A673 (cell line): ENCODE measurements at regions of chr14 and their contacts with region 1.

Region 1: GRCh38 chr14:77320238-77320935 is at the start of gene POMT2:
- DNase-seq: peak; percentile 95
- H3K4me3 ChIP-seq: peak within 1 kb of the TSS; percentile 82
- H3K27ac ChIP-seq: peak within 1 kb of the TSS; percentile 97
- H3K4me1 ChIP-seq: peaks cover 21% of the 10 kb centered on the region
- H3K27me3 ChIP-seq: no peaks in the 10 kb centered on the region
- CTCF ChIP-seq: peak; percentile 36; the same call in 1 of the 2 replicates
- total RNA-seq, gene POMT2: 49.5 and 55.6 TPM in 2 replicates

Region 2: GRCh38 chr14:77376771-77377501 is 56.5 kb after region 1 on chr14 and contains the starts of genes SAMD15 and TMED8:
- CTCF ChIA-PET with region 1: interaction called, 3 read pairs
- POLR2A ChIA-PET with region 1: no interaction called
- intact Hi-C with region 1: loop called (anchors 2 kb)
- DNase-seq: peak; percentile 89
- H3K4me3 ChIP-seq: peak within 1 kb of the TSS; percentile 76
- H3K27ac ChIP-seq: peak within 1 kb of the TSS; percentile 85
- H3K4me1 ChIP-seq: peaks cover 10% of the 10 kb centered on the region
- H3K27me3 ChIP-seq: no peaks in the 10 kb centered on the region
- CTCF ChIP-seq: 0 out of 2 replicates have a peak, but pooled peaks have one; percentile 25
- total RNA-seq, gene SAMD15: 2.4 and 2.9 TPM in 2 replicates
- total RNA-seq, gene TMED8: 21.0 and 22.8 TPM in 2 replicates

Region 3: GRCh38 chr14:77400219-77400618 is 79.8 kb after region 1 on chr14:
- CTCF ChIA-PET with region 1: no interaction called
- POLR2A ChIA-PET with region 1: interaction called, 17 read pairs
- intact Hi-C with region 1: no loop called
- DNase-seq: no peak
- H3K4me3 ChIP-seq: no peak overlapping the region
- H3K27ac ChIP-seq: no peak overlapping the region
- H3K4me1 ChIP-seq: no peaks in the 10 kb centered on the region
- H3K27me3 ChIP-seq: no peaks in the 10 kb centered on the region
- CTCF ChIP-seq: no peak

Region 4: DNA sequence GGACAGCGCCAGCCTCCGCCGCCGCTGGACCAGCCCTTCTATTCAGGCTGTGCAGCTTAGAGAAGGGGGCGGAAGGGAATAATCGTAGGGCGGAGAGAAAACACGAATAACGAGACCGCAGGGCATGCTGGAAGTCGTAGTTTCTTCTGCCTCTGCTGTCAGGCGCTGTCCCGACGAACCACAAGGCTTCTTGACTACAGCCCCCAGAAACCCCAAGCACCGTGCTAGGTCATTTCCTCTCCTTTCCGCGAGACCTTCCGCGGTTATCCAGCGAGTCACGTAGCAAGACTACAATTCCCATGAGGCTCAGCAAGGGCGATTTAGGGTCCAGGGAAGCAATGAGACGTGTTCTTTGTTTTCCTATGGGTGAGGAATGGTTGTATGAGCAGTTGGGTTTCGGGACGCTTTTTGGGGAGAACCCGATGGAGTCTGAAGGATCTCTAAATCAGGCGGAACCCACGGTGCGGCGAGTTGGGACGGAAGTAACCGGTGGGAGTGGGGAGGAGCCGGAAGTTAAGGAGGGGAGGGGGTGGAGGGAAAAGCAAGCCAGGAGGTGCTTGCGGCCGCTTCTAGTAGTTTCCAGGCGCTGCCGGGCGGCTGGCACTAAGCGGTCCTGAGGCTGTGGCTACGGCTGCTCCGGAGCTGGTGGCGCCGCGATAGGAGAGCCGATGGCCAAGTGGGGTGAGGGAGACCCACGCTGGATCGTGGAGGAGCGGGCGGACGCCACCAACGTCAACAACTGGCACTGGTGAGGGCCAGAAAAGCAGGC is 137.3 kb after region 1 on chr14 and contains the starts of genes AHSA1 and VIPAS39:
- CTCF ChIA-PET with region 1: interaction called, 3 read pairs
- POLR2A ChIA-PET with region 1: interaction called, 9 read pairs
- intact Hi-C with region 1: loop called (anchors 2 kb)
- DNase-seq: peak; percentile 99
- H3K4me3 ChIP-seq: peak within 1 kb of the TSS; percentile 88
- H3K27ac ChIP-seq: peak within 1 kb of the TSS; percentile 95
- H3K4me1 ChIP-seq: peaks cover 14% of the 10 kb centered on the region
- H3K27me3 ChIP-seq: no peaks in the 10 kb centered on the region
- CTCF ChIP-seq: no peak
- total RNA-seq, gene AHSA1: 276 and 375 TPM in 2 replicates
- total RNA-seq, gene VIPAS39: 16.7 and 19.8 TPM in 2 replicates

Region 5: DNA sequence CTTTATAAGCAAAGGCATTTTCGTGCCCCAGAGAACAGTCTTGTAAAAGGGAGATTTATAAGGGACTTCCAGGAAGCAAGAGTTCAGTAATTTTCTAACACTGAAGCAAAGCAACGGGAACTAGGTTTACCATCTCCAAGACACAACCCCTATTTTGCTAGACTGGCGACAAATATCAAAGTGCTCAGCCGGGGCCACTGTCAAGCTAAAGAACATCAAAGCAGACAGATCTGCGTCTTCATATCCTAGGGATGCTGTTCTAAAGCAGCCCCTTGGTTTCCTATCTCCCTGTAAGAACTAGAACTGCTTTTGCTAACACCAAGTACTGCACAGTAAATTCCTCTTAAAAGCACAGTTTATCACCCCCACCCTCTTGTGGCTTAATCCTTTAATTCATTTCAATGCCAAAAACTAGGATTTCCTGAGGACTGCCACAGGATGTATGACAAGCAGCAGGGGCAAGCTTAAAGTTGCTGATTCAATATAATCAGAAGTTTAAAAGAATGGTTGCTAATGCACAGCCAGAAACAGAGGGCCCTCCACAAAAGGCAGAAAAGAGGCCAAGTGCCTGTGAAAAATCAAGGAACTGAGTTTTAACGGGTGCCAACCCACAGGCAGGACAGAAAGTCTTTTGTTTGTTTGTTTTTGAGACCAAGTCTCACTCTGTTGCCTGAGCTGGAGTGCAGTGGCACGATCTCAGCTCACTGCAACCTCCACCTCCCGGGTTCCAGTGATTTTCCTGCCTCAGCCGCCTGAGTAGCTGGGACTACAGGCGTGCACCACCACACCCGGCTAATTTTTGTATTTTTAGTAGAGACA is 222.2 kb after region 1 on chr14:
- CTCF ChIA-PET with region 1: no interaction called
- POLR2A ChIA-PET with region 1: no interaction called
- intact Hi-C with region 1: loop called (anchors 10 kb)
- DNase-seq: peak; percentile 96
- H3K4me3 ChIP-seq: peak overlapping the region; percentile 27
- H3K27ac ChIP-seq: peak overlapping the region; percentile 88
- H3K4me1 ChIP-seq: peaks cover 29% of the 10 kb centered on the region
- H3K27me3 ChIP-seq: no peaks in the 10 kb centered on the region
- CTCF ChIP-seq: no peak